ENCODE measurements at regions of chr1 and their contacts with region 1.

Region 1: DNA sequence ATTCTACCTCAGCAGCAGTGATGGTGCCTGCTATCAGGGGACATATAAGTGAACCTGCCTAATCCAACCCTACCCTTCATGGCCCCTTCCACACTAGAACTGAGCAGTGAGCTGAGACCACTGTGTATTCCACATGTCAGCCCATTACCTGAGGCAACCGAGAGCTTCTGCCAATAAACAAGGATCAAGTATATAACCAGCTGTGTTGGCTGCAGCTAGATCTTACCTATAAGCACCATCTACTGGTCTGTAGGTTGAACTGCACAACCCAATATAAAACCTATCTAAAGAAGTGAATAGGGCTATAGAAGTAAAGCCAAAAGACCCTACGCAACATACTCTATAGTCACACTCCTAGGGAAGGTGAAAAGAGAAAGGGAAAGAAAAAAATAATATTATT is 376.9 kb downstream of the HHIPL2 start:
- DNase-seq: no peak
- ATAC-seq: peak in 3 of 4 donors; percentile 28 to 75 (median 67)
- H3K4me3 ChIP-seq: no peak overlapping the region
- H3K27ac ChIP-seq: no peak overlapping the region
- H3K4me1 ChIP-seq: no peaks in the 10 kb centered on the region
- H3K27me3 ChIP-seq: no peaks in the 10 kb centered on the region
- CTCF ChIP-seq: peak; percentile 29 to 58 (median 41)
- POLR2A ChIP-seq: no peak

Region 2: GRCh38 chr1:221478050-221478949 is 692.7 kb before region 1 on chr1:
- intact Hi-C with region 1: loop called in 5 of 10 experiments (anchors 5 to 10 kb)
- DNase-seq: peak; percentile 21 to 61 (median 52)
- ATAC-seq: peak in 3 of 4 donors; percentile 72 to 93 (median 88)
- H3K4me3 ChIP-seq: no peak overlapping the region
- H3K27ac ChIP-seq: no peak overlapping the region
- H3K4me1 ChIP-seq: no peaks in the 10 kb centered on the region
- H3K27me3 ChIP-seq: peaks cover 0 to 13% (median 0%) of the 10 kb centered on the region in 9 donors
- CTCF ChIP-seq: peak in 11 of 12 donors; percentile 43 to 69 (median 55)
- POLR2A ChIP-seq: no peak

Region 3: GRCh38 chr1:221487781-221488524 is 683.1 kb before region 1 on chr1:
- intact Hi-C with region 1: loop called in 2 of 10 experiments (anchors 10 kb)
- DNase-seq: no peak
- ATAC-seq: no peak
- H3K4me3 ChIP-seq: no peak overlapping the region
- H3K27ac ChIP-seq: no peak overlapping the region
- H3K4me1 ChIP-seq: no peaks in the 10 kb centered on the region
- H3K27me3 ChIP-seq: no peaks in the 10 kb centered on the region
- CTCF ChIP-seq: no peak
- POLR2A ChIP-seq: no peak

Region 4: GRCh38 chr1:221543529-221544120 is 627.4 kb before region 1 on chr1:
- intact Hi-C with region 1: loop called in 8 of 10 experiments (anchors 5 to 10 kb)
- DNase-seq: no peak
- ATAC-seq: peak in 1 of 4 donors; percentile 13
- H3K4me3 ChIP-seq: no peak overlapping the region
- H3K27ac ChIP-seq: no peak overlapping the region
- H3K4me1 ChIP-seq: no peaks in the 10 kb centered on the region
- H3K27me3 ChIP-seq: peaks cover 0 to 5% (median 0%) of the 10 kb centered on the region in 9 donors
- CTCF ChIP-seq: peak in 11 of 12 donors; percentile 19 to 64 (median 54)
- POLR2A ChIP-seq: no peak

Region 5: DNA sequence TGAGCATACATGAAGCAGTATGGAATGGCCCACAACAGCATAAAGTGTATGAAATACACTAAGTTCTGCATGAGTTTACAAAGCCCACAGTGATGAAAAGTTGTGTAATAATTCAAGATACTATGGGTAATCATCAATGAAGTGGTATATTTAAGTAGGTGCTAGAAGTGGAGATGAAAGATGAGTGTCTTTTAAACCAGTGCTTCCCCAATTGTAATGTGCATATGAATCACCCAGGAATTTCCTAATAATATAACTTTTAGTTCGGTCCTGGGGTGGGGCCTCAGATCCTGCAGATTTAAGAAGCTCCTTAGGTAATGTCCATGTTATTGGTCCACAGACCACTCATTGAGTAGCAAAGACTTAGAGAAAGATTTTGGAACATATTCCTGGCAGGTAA is 614.0 kb before region 1 on chr1:
- intact Hi-C with region 1: loop called in 1 of 10 experiments (anchors 10 kb)
- DNase-seq: no peak
- ATAC-seq: no peak
- H3K4me3 ChIP-seq: no peak overlapping the region
- H3K27ac ChIP-seq: no peak overlapping the region
- H3K4me1 ChIP-seq: peaks cover 0 to 7% (median 0%) of the 10 kb centered on the region in 12 donors
- H3K27me3 ChIP-seq: no peaks in the 10 kb centered on the region
- CTCF ChIP-seq: no peak
- POLR2A ChIP-seq: no peak

Region 6: DNA sequence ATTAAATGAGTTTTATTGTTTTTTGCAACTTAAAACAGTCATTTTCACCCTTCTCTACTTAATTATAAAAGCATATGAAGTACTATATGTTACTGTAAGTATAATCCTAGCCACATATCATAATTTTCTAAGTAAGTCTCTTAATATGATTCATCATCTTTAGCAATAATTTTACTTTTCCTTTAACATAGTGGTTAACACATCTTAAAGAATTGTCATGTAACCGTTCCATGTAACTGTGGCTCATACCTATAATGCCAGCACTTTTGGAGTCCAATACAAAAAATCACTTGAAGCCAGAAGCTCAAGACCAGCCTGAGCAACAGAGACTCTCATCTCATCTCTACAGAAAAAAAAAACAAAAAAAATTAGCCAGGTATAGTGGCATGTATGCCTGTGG is 168.5 kb before region 1 on chr1:
- intact Hi-C with region 1: loop called in 1 of 10 experiments (anchors 5 kb)
- DNase-seq: no peak
- ATAC-seq: no peak
- H3K4me3 ChIP-seq: no peak overlapping the region
- H3K27ac ChIP-seq: no peak overlapping the region
- H3K4me1 ChIP-seq: peaks cover 0 to 5% (median 0%) of the 10 kb centered on the region in 12 donors
- H3K27me3 ChIP-seq: no peaks in the 10 kb centered on the region
- CTCF ChIP-seq: no peak
- POLR2A ChIP-seq: no peak

Region 7: DNA sequence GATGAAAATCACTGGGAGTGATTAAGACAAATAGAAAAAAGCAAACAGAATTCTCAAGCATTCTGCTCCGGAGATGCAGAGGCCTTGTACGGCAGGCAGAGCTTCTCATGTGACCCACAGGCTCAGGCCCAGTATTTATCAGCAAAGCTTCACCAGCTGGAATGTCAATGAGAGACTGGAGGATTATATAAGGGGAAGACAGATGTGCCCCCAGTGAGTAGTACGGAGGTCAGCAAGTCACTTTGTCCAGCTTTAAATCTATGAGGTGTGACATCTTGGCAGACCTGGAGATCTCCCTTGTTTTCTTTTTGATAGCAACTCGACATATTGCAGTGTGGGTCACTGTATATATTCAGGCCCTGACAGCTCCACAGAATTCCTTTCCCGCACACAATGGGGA is 270.1 kb after region 1 on chr1:
- intact Hi-C with region 1: no loop called
- DNase-seq: peak in 1 of 5 donors; percentile 28
- ATAC-seq: peak in 3 of 4 donors; percentile 31 to 55 (median 51)
- H3K4me3 ChIP-seq: no peak overlapping the region
- H3K27ac ChIP-seq: no peak overlapping the region
- H3K4me1 ChIP-seq: peaks cover 0 to 9% (median 0%) of the 10 kb centered on the region in 12 donors
- H3K27me3 ChIP-seq: no peaks in the 10 kb centered on the region
- CTCF ChIP-seq: no peak
- POLR2A ChIP-seq: no peak